OCI-LY7 (cell line): ENCODE measurements at regions of chr1 and their contacts with region 1.

Region 1: GRCh38 chr1:2158272-2158671 is 36.3 kb downstream of the FAAP20 start:
- DNase-seq: no peak
- H3K4me3 ChIP-seq: no peak overlapping the region
- H3K27ac ChIP-seq: no peak overlapping the region
- H3K4me1 ChIP-seq: no peaks in the 10 kb centered on the region
- CTCF ChIP-seq: no peak

Region 2: DNA sequence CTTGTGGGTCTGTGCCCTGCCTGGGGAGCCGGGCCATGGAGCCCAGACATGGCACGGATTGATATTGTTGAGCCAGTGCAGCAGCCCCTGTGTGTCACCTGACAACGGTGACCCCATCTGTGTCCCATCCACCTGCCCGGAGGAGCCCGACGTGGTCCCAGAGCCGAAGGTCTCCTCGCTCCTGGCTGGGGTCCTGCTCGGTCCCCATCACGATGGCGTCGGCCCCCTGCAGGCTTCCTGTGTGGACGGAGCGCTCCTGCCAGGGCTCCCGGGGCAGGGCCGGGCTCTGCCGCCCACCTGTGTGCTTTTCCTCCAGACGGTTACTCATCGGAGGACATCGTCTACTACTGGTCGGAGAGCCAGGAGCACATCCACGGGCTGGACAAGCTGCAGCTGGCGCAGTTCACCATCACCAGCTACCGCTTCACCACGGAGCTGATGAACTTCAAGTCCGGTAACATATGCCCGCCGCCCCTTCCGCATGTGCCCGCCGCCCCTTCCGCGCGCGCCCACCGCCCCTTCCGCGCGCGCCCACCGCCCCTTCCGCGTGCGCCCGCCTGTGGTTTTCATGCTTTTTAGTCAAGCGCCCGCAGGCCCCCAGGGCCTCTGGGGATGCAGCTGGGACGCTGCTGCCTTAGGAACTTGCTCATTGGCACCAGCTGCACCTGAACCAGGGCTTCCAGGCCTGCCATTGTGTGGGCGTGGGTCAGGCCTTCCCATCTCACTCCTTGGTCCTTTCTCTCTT is 130.3 kb before region 1 on chr1:
- CTCF ChIA-PET with region 1: interaction called, 11 read pairs
- POLR2A ChIA-PET with region 1: no interaction called
- intact Hi-C with region 1: no loop called
- DNase-seq: peak; percentile 47
- H3K4me3 ChIP-seq: no peak overlapping the region
- H3K27ac ChIP-seq: no peak overlapping the region
- H3K4me1 ChIP-seq: peaks cover 9% of the 10 kb centered on the region
- CTCF ChIP-seq: no peak

Region 3: DNA sequence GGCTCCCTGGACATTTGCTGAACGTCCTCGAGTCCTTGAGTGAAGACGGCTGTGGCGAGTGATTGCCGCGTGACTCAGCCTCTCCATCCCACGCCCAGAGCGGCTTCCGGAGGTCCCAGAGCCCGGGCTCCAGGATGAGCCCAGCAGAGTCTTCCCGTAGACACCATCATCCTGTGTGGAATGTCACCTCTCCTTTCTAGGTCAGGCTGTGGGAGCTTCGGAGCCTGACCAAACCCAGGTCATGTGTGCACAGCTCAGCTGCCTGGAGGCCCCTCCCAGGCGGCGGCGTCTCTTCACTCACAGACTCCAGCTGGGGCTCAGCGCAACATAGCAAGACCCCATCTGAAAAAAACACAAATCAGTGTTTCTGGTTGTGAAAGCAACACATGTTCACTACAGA is 69.8 kb before region 1 on chr1:
- CTCF ChIA-PET with region 1: no interaction called
- POLR2A ChIA-PET with region 1: no interaction called
- intact Hi-C with region 1: no loop called
- DNase-seq: no peak
- H3K4me3 ChIP-seq: no peak overlapping the region
- H3K27ac ChIP-seq: no peak overlapping the region
- H3K4me1 ChIP-seq: no peaks in the 10 kb centered on the region
- CTCF ChIP-seq: no peak

Region 4: DNA sequence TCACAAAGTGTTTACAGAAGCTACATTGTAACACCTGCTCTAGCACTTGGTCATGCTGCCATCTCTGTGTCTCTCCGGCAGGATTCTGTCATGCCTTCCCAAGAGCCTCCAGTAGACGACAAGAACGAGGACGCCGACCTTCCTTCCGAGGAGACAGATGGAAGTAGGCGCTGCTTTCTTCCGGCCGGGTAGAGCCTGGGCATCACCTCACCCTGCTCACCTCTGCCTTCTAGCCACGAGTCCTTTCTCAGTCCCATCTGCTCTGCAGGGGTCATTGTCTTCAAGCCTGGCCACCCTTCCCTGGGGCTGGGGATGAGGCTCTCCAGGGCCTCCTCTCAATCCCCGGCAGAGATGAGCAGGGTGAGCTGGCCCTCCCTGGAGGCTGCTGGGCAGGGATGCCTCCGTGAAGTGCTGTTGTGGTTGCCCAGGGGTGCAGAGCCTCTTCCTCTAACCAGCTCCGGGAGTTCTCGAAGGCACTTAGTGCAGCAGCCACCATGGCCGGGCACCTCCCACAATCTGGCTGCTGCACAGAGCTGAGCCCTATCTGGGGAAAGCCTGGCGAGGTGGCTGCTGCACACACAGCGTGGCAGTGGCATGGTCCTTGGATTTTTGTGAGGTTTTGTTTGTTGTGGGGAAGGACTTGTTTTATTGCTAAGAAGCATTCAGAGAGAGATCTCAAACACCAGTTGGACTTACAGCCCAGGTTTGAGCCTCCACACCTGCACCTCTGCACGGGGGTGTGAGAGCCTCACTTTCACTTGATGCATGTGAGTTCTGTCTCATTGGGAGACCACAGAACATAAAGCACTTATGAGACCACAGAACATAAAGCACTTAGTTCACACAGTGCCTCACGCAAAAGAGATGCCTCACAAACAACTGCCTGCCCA is 12.1 kb before region 1 on chr1:
- CTCF ChIA-PET with region 1: no interaction called
- POLR2A ChIA-PET with region 1: no interaction called
- intact Hi-C with region 1: no loop called
- DNase-seq: no peak
- H3K4me3 ChIP-seq: no peak overlapping the region
- H3K27ac ChIP-seq: no peak overlapping the region
- H3K4me1 ChIP-seq: peaks cover 11% of the 10 kb centered on the region
- CTCF ChIP-seq: no peak